ENCODE measurements at regions of chr1 and their contacts with region 1.

Region 1: GRCh38 chr1:202852163-202852904 is 36.6 kb downstream of the RABIF start:
- DNase-seq: peak; percentile 70
- ATAC-seq: peak; percentile 93
- H3K4me3 ChIP-seq: no peak overlapping the region
- H3K27ac ChIP-seq: no peak overlapping the region
- H3K4me1 ChIP-seq: no peaks in the 10 kb centered on the region
- H3K27me3 ChIP-seq: no peaks in the 10 kb centered on the region
- CTCF ChIP-seq: peak; percentile 87

Region 2: GRCh38 chr1:202750758-202751157 is 101.6 kb before region 1 on chr1:
- CTCF ChIA-PET with region 1: interaction called, 4 read pairs
- POLR2A ChIA-PET with region 1: no interaction called
- intact Hi-C with region 1: loop called (anchors 5 kb)
- DNase-seq: peak; percentile 11
- ATAC-seq: no peak
- H3K4me3 ChIP-seq: no peak overlapping the region
- H3K27ac ChIP-seq: no peak overlapping the region
- H3K4me1 ChIP-seq: no peaks in the 10 kb centered on the region
- H3K27me3 ChIP-seq: no peaks in the 10 kb centered on the region
- CTCF ChIP-seq: peak; percentile 36

Region 3: GRCh38 chr1:202770135-202770534 is 82.2 kb before region 1 on chr1:
- CTCF ChIA-PET with region 1: no interaction called
- POLR2A ChIA-PET with region 1: no interaction called
- intact Hi-C with region 1: loop called (anchors 5 kb)
- DNase-seq: no peak
- ATAC-seq: no peak
- H3K4me3 ChIP-seq: no peak overlapping the region
- H3K27ac ChIP-seq: no peak overlapping the region
- H3K4me1 ChIP-seq: no peaks in the 10 kb centered on the region
- H3K27me3 ChIP-seq: no peaks in the 10 kb centered on the region
- CTCF ChIP-seq: no peak

Region 4: DNA sequence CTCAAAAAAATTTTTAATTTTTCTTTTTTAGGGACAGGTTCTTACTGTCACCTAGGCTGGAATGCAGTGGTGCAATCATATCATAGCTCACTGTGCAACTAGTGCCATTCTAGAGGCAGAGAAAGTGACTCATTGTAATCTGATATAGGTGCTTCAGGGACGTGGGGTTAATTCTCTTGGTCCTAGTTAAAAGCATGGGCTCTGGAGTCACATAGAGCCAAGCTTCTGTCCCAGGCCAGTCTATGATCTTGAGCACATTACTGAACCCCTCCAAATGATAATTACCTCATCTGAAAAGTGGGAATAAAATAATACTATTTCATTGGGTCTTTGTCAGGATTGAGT is 106.9 kb after region 1 on chr1:
- CTCF ChIA-PET with region 1: no interaction called
- POLR2A ChIA-PET with region 1: no interaction called
- intact Hi-C with region 1: no loop called
- DNase-seq: peak; percentile 94
- ATAC-seq: peak; percentile 66
- H3K4me3 ChIP-seq: peak overlapping the region; percentile 96; the same call in 1 of the 2 replicates
- H3K27ac ChIP-seq: peak overlapping the region; percentile 38
- H3K4me1 ChIP-seq: peaks cover 39% of the 10 kb centered on the region
- H3K27me3 ChIP-seq: no peaks in the 10 kb centered on the region
- CTCF ChIP-seq: no peak

Region 5: DNA sequence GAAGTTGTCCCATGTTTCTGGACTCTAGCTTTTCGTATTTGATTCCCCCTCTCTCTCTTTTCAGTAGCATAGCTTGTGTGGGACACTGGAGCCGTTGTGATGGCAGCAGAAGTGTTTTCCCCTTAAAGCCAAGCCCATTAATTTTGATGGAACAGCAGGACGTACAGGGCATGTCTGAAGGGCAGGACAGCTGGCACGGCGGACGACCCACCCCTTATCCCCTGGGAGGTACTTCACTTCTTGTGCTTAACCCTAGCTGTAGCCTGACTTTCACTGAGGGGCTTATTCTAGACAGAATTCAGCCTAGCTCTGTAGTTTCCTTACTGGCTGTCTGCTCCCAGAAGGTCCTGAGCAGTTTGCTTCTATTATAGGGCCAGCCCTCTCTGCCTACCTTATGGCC is 165.4 kb after region 1 on chr1:
- CTCF ChIA-PET with region 1: no interaction called
- POLR2A ChIA-PET with region 1: no interaction called
- intact Hi-C with region 1: no loop called
- DNase-seq: no peak
- ATAC-seq: no peak
- H3K4me3 ChIP-seq: no peak overlapping the region
- H3K27ac ChIP-seq: no peak overlapping the region
- H3K4me1 ChIP-seq: no peaks in the 10 kb centered on the region
- H3K27me3 ChIP-seq: no peaks in the 10 kb centered on the region
- CTCF ChIP-seq: no peak

Measured in PC-3 (cell line).